Activated CD8-positive, alpha-beta memory T cell treated with anti-CD3 and anti-CD28 coated beads, Interleukin-2, amount 10 ng/mL, durations not matched to agents 7 days and 5 days (primary cell): ENCODE measurements at regions of chr1 and their contacts with region 1.

Region 1: GRCh38 chr1:202343652-202344349 is 2.1 kb upstream of the UBE2T start:
- DNase-seq: no peak
- ATAC-seq: no peak
- H3K4me3 Mint-ChIP-seq: peak overlapping the region; percentile 54
- H3K27ac Mint-ChIP-seq: peak overlapping the region; percentile 94
- H3K4me1 Mint-ChIP-seq: peaks cover 41% of the 10 kb centered on the region
- H3K27me3 Mint-ChIP-seq: no peaks in the 10 kb centered on the region

Region 2: DNA sequence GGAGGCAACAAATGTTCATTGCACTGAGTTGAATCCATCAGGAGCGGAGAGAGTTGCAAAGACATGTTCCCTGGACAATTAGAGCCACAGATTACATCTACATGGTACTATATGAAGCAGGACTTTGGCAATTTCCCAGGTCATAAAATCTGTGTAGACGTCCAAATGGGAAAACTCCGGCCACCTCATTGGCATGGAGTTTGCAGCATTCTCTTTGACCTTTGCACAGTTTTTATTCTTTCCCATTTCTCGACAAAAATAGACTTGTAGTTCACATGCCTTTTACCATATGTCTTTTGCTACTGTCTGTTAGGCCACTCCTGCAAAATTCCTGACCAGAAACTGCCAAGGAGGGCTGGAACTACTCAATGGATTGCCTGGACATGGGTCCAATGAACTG is 50.2 kb before region 1 on chr1:
- CTCF ChIA-PET with region 1: no interaction called
- DNase-seq: no peak
- ATAC-seq: no peak
- H3K4me3 Mint-ChIP-seq: no peak overlapping the region
- H3K27ac Mint-ChIP-seq: no peak overlapping the region
- H3K4me1 Mint-ChIP-seq: peaks cover 18% of the 10 kb centered on the region
- H3K27me3 Mint-ChIP-seq: peaks cover 10% of the 10 kb centered on the region

Region 3: GRCh38 chr1:202713110-202713509 is 369.3 kb after region 1 on chr1:
- CTCF ChIA-PET with region 1: interaction called, 18 read pairs
- DNase-seq: no peak
- ATAC-seq: no peak
- H3K4me3 Mint-ChIP-seq: no peak overlapping the region
- H3K27ac Mint-ChIP-seq: no peak overlapping the region
- H3K4me1 Mint-ChIP-seq: no peaks in the 10 kb centered on the region
- H3K27me3 Mint-ChIP-seq: peaks cover 72% of the 10 kb centered on the region